Spleen (tissue), 13 donors: ENCODE measurements at regions of chr16 and their contacts with region 1.

Region 1: GRCh38 chr16:11639925-11640899 is 28.0 kb upstream of the SNN start:
- DNase-seq: peak; percentile 85
- H3K4me3 ChIP-seq: peak overlapping the region in 1 of 8 donors; percentile 58
- H3K27ac ChIP-seq: peak overlapping the region in 7 of 8 donors; percentile 82 to 96 (median 88)
- H3K4me1 ChIP-seq: peaks cover 4 to 43% (median 18%) of the 10 kb centered on the region in 6 donors
- H3K27me3 ChIP-seq: peaks cover 0 to 7% (median 0%) of the 10 kb centered on the region in 7 donors
- CTCF ChIP-seq: peak in 1 of 11 experiments; percentile 16
- POLR2A ChIP-seq: peak in 1 of 3 donors; percentile 22

Region 2: GRCh38 chr16:11401161-11402050 is 238.8 kb before region 1 on chr16:
- intact Hi-C with region 1: loop called (anchors 5 kb)
- DNase-seq: peak; percentile 69
- H3K4me3 ChIP-seq: no peak overlapping the region
- H3K27ac ChIP-seq: no peak overlapping the region
- H3K4me1 ChIP-seq: peaks cover 0 to 2% (median under 1%) of the 10 kb centered on the region in 6 donors
- H3K27me3 ChIP-seq: no peaks in the 10 kb centered on the region
- CTCF ChIP-seq: no peak
- POLR2A ChIP-seq: no peak